ENCODE measurements at regions of chr13 and their contacts with region 1.

Region 1: GRCh38 chr13:46134961-46135522 is 30.2 kb upstream of the CPB2 start:
- DNase-seq: no peak
- H3K4me3 Mint-ChIP-seq: no peak overlapping the region
- H3K27ac Mint-ChIP-seq: peak overlapping the region; percentile 73
- H3K4me1 Mint-ChIP-seq: peaks cover 23% of the 10 kb centered on the region
- H3K27me3 Mint-ChIP-seq: no peaks in the 10 kb centered on the region

Region 2: DNA sequence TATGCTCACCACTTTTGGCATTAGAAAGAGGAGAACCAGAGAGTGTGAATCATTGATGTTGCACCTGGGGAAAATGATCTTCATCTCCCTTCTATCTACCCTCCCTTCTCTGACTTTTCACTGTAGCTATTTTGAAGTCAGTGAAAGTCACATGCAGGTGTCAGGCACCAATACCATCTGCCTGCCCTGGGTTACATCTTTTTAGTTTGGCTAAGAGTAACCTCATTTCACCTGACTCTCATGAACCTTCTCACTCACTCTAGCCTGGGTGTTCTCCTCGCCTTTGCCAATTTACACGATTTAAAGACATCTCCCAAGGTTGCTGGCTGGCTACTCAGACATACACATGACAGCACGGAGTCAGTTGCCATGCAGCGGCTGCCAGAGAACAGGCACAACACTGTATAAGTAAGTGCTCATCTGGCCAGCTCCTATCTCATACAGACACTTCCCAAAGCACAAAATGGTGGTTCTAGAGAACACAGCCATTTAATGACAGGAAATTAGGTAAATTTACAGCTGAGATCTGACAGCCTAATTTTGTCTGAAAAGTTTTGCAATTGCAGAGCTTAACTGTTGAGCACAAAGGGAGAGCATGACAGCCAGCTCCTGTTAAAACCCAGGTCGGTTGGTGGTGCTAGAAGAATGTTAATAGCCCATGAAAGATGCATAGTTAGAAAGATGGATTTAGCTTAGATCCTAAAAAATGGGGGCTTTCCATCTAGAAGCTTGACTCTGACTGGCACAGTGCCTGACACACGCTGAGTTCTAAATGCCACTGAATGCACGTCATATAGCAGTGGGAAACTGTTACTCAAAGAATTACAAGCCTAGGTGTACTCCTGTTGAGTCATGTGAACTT is 14.5 kb after region 1 on chr13:
- intact Hi-C with region 1: loop called (anchors 2 kb)
- DNase-seq: no peak
- H3K4me3 Mint-ChIP-seq: no peak overlapping the region
- H3K27ac Mint-ChIP-seq: peak overlapping the region; percentile 83
- H3K4me1 Mint-ChIP-seq: peaks cover 45% of the 10 kb centered on the region
- H3K27me3 Mint-ChIP-seq: no peaks in the 10 kb centered on the region

Measured in activated T-helper 1 cell treated with anti-CD3 and anti-CD28 coated beads, Interleukin-12 subunit alpha, Interleukin-12 subunit beta, Interleukin-2, Interleukin-4 antibody, amounts not matched to agents 30 ng/mL and 10 ng/mL and 1 ng/mL, durations not matched to agents 14 hours and 24 hours and 36 hours (primary cell).